Lower leg skin (tissue), 4 donors: ENCODE measurements at regions of chr19 and their contacts with region 1.

Region 1: GRCh38 chr19:18589380-18590272 is 1.0 kb downstream of the REX1BD start:
- DNase-seq: peak in 1 of 2 donors; percentile 94
- H3K4me3 ChIP-seq: peak overlapping the region; percentile 83
- CTCF ChIP-seq: no peak
- POLR2A ChIP-seq: no peak

Region 2: DNA sequence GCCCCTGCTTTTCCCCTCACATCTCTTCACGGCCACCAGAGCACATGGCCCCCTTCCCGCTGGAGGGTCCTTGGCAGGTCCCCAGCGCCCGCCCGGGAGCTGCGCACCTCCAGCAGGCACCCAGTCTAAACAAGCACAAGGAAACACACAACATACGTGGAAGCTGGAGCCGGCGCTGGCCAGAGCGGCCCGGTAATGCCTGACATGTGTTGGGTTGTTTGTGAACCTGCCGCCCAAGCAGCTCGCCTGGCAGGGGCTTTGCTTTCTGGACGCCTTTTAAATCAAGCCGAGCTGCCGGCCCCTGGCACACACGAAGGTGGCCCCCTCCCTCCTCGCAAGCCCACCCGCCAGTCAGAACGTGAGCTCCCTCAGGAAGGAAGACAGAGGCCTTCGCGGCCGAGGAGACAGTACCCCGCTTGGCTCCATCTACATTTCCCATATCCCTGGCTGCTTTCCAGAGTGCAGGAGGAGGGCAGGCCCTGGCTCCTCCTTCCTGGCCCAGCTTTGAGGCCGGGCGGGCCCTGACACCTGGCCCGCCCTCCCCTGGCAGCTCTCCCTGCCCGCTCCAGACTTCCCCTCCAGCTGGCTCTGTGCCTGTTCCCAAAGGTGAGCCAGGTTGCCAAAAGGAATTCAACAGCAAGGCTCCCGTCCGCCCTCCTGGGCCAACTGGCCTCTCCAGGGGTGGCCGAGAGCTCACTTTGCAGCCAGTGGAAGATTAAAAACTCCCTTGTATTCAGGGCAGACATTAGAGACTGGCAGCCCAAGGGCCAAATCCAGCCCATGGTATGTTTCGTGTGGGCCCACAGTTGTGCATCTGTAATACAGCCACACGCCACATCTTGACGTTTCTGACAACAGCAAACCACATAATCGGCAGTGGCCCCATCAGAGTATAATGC is 172.7 kb after region 1 on chr19:
- intact Hi-C with region 1: loop called (anchors 10 kb)
- DNase-seq: peak; percentile 76 to 91
- H3K4me3 ChIP-seq: no peak overlapping the region
- CTCF ChIP-seq: no peak
- POLR2A ChIP-seq: no peak

Region 3: DNA sequence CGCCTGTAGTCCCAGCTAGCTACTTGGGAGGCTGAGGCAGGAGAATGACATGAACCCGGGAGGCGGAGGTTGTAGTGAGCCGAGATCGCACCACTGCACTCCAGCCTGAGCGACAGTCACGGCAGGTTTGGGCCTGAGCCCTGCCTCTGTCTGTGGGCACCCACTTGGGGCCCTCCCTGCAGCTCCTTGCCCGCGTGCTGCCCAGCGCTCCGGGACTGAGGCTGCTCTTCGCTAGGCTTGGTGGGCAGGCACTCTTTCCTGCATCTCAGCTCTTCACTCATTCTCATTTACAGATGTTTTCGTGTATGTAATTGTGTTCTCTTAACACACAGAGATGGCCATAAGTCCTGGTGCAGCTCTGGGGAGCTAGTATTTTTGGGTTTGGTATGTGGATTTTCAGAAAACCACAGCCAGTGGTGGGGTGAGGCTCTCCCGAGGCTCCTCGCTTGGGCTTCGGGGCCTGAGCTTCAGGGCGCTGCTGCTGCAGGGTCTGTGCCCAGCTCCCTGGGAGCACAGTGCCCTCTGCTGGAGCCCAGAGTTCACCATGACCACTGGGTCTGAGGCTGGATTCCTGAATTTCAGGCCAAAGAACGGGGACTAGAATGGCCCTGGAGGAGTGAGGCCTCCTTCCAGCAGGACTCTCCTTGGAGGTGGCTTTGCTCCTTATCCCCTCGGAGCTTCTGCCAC is 257.4 kb after region 1 on chr19:
- intact Hi-C with region 1: loop called (anchors 10 kb)
- DNase-seq: peak; percentile 62 to 95
- H3K4me3 ChIP-seq: no peak overlapping the region
- CTCF ChIP-seq: peak in 1 of 3 donors; percentile 14
- POLR2A ChIP-seq: no peak